Dorsolateral prefrontal cortex (tissue), 120 donors: ENCODE measurements at regions of chr16 and their contacts with region 1.

Region 1: GRCh38 chr16:24729362-24729984 is at the start of gene TNRC6A:
- DNase-seq: peak; percentile 74 to 92 (median 84)
- H3K4me3 ChIP-seq: peak within 1 kb of the TSS; percentile 58 to 97 (median 85)
- H3K27ac ChIP-seq: peak within 1 kb of the TSS; percentile 81 to 99 (median 95)
- H3K27me3 ChIP-seq: no peaks in the 10 kb centered on the region
- CTCF ChIP-seq: peak in 21 of 56 donors; percentile 3 to 38 (median 21)
- total RNA-seq, gene TNRC6A: 88.7 to 202 (median 140) TPM

Region 2: DNA sequence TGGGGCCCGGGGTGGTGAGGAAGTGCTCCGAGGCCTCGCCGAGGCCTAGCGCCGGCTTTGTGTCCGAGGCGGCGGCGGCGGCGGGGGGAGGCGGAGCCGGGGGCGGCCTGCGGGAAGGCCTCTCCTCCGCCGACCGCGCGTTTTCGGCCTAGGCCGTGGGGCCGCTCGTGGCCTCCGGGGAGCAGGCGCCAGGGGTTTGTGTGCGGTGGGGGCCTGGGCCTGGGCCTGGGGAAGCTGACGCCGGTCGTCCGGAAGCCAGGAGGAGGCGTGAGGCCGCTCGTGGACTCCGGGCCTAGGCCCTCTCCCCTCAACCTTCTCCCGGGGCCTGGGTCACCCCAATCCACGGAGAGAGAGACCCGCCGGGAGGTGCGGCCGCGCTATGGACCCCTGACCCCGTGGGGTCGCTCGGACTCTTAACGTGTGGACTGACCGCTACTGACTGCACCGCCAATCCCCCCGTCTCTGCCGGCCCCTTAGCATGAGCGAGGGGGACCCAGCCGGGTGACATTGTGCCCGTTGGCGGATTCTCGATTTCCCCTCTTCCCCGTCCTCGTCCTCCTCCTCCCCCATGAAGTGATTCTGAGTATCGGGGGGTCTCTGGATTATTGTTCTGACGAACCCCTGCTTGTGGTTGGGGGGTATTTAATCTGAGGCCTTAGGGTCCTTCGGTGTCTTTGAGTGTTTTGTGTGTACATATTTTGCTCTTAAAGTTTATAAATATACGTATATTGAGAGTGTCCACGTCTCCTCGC is 189.4 kb before region 1 on chr16:
- intact Hi-C with region 1: loop called (anchors 5 to 10 kb)
- DNase-seq: peak in 3 of 10 donors; percentile 39 to 67 (median 46)
- H3K4me3 ChIP-seq: peak overlapping the region; percentile 72 to 100 (median 96)
- H3K27ac ChIP-seq: peak overlapping the region; percentile 87 to 100 (median 99)
- H3K27me3 ChIP-seq: no peaks in the 10 kb centered on the region
- CTCF ChIP-seq: no peak

Region 3: GRCh38 chr16:24771132-24771778 is 41.8 kb after region 1 on chr16:
- intact Hi-C with region 1: loop called in 1 of 2 experiments (anchors 5 kb)
- DNase-seq: no peak
- H3K4me3 ChIP-seq: no peak overlapping the region
- H3K27ac ChIP-seq: peak overlapping the region in 8 of 59 donors; percentile 3 to 56 (median 11)
- H3K27me3 ChIP-seq: no peaks in the 10 kb centered on the region
- CTCF ChIP-seq: no peak